Activated B cell treated with CpG ODN at 0.5 μM for 24 hours (primary cell): ENCODE measurements at regions of chr6 and their contacts with region 1.

Region 1: GRCh38 chr6:14108571-14109410 is 8.8 kb upstream of the CD83 start:
- DNase-seq: peak; percentile 69
- ATAC-seq: peak; percentile 71
- H3K4me3 Mint-ChIP-seq: peak overlapping the region; percentile 79
- H3K27ac Mint-ChIP-seq: peak overlapping the region; percentile 97
- H3K4me1 Mint-ChIP-seq: peaks cover 67% of the 10 kb centered on the region
- H3K27me3 Mint-ChIP-seq: no peaks in the 10 kb centered on the region
- CTCF ChIP-seq: no peak

Region 2: GRCh38 chr6:14095437-14095836 is 13.4 kb before region 1 on chr6:
- CTCF ChIA-PET with region 1: interaction called, 35 read pairs
- POLR2A ChIA-PET with region 1: interaction called, 747 read pairs
- intact Hi-C with region 1: loop called (anchors 1 kb)
- DNase-seq: peak; percentile 72
- ATAC-seq: peak; percentile 73
- H3K4me3 Mint-ChIP-seq: peak overlapping the region; percentile 85
- H3K27ac Mint-ChIP-seq: peak overlapping the region; percentile 100
- H3K4me1 Mint-ChIP-seq: peaks cover 96% of the 10 kb centered on the region
- H3K27me3 Mint-ChIP-seq: no peaks in the 10 kb centered on the region
- CTCF ChIP-seq: no peak

Region 3: GRCh38 chr6:14129575-14129974 is 20.8 kb after region 1 on chr6:
- CTCF ChIA-PET with region 1: interaction called, 5 read pairs
- POLR2A ChIA-PET with region 1: interaction called, 371 read pairs
- intact Hi-C with region 1: no loop called
- DNase-seq: no peak
- ATAC-seq: peak; percentile 19
- H3K4me3 Mint-ChIP-seq: peak overlapping the region; percentile 79
- H3K27ac Mint-ChIP-seq: peak overlapping the region; percentile 46
- H3K4me1 Mint-ChIP-seq: peaks cover 100% of the 10 kb centered on the region
- H3K27me3 Mint-ChIP-seq: no peaks in the 10 kb centered on the region
- CTCF ChIP-seq: no peak

Region 4: GRCh38 chr6:14135893-14136539 is 27.2 kb after region 1 on chr6:
- CTCF ChIA-PET with region 1: no interaction called
- POLR2A ChIA-PET with region 1: interaction called, 15 read pairs
- intact Hi-C with region 1: no loop called
- DNase-seq: no peak
- ATAC-seq: no peak
- H3K4me3 Mint-ChIP-seq: no peak overlapping the region
- H3K27ac Mint-ChIP-seq: peak overlapping the region; percentile 73
- H3K4me1 Mint-ChIP-seq: peaks cover 65% of the 10 kb centered on the region
- H3K27me3 Mint-ChIP-seq: no peaks in the 10 kb centered on the region
- CTCF ChIP-seq: no peak